CD4-positive, alpha-beta memory T cell (primary cell): ENCODE measurements at regions of chr16 and their contacts with region 1.

Region 1: GRCh38 chr16:68085259-68086071 is at the start of gene NFATC3:
- DNase-seq: peak; percentile 98 to 99 (median 98)
- H3K4me3 ChIP-seq: peak within 1 kb of the TSS; percentile 79 to 92
- H3K4me3 Mint-ChIP-seq: peak within 1 kb of the TSS; percentile 90 to 99 (median 94)
- H3K27ac ChIP-seq: peak within 1 kb of the TSS; percentile 89
- H3K27ac Mint-ChIP-seq: peak within 1 kb of the TSS; percentile 86 to 97 (median 92)
- H3K4me1 ChIP-seq: peaks cover 78% of the 10 kb centered on the region
- H3K4me1 Mint-ChIP-seq: peaks cover 53 to 80% (median 63%) of the 10 kb centered on the region in 4 donors
- H3K27me3 ChIP-seq: no peaks in the 10 kb centered on the region
- H3K27me3 Mint-ChIP-seq: no peaks in the 10 kb centered on the region
- total RNA-seq, gene NFATC3: 127 to 134 TPM

Region 2: DNA sequence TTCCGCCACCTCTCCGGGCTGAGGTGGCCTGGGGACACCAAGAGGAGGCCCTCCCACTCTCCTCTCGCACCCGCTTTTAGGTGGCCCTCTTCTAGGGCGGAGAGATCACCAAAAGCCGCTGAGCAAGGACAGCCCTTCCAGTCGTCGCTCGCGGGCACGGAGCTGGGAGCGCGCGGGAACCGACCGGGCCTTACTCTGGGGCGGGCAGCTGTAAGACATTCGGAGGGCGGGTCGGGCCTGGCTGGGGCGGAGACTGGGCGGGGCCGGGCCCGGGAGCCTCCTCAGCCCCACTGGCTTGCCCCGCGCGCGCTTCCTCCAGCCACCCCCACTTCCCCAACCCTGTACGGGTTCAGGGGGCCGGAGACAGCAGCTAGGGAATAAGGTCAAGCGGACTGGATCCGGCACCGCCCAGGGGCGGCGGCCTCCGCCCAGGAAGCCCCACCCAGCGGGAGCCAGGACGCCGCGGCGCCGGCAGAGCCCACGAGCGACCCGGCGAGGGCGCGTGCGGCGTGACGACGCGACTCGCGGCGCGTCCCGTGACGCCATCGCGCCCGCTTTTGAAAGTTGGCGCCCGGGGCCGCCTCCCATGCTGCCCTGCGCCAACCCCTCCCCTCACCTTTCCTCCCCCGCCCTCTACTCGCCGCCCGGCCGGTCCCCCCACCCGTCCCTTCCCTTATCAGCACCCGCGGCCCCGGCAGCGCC is 523.5 kb before region 1 on chr16:
- CTCF ChIA-PET with region 1: interaction called, 3 read pairs
- POLR2A ChIA-PET with region 1: interaction called, 9 read pairs
- intact Hi-C with region 1: loop called (anchors 1 kb)
- DNase-seq: peak; percentile 96 to 98 (median 97)
- H3K4me3 ChIP-seq: peak overlapping the region; percentile 61 to 78
- H3K4me3 Mint-ChIP-seq: peak overlapping the region; percentile 89 to 97 (median 91)
- H3K27ac ChIP-seq: peak overlapping the region; percentile 73
- H3K27ac Mint-ChIP-seq: peak overlapping the region; percentile 92 to 97 (median 96)
- H3K4me1 ChIP-seq: peaks cover 52% of the 10 kb centered on the region
- H3K4me1 Mint-ChIP-seq: peaks cover 23 to 53% (median 37%) of the 10 kb centered on the region in 4 donors
- H3K27me3 ChIP-seq: no peaks in the 10 kb centered on the region
- H3K27me3 Mint-ChIP-seq: no peaks in the 10 kb centered on the region

Region 3: GRCh38 chr16:67841764-67842508 is 243.5 kb before region 1 on chr16 and contains the start of gene THAP11:
- CTCF ChIA-PET with region 1: no interaction called
- POLR2A ChIA-PET with region 1: interaction called, 3 read pairs
- intact Hi-C with region 1: loop called (anchors 1 kb)
- DNase-seq: peak; percentile 94 to 98 (median 95)
- H3K4me3 ChIP-seq: peak within 1 kb of the TSS; percentile 74 to 99
- H3K4me3 Mint-ChIP-seq: peak within 1 kb of the TSS; percentile 93 to 98 (median 96)
- H3K27ac ChIP-seq: peak within 1 kb of the TSS; percentile 98
- H3K27ac Mint-ChIP-seq: peak within 1 kb of the TSS; percentile 97 to 99 (median 98)
- H3K4me1 ChIP-seq: peaks cover 38% of the 10 kb centered on the region
- H3K4me1 Mint-ChIP-seq: peaks cover 25 to 48% (median 36%) of the 10 kb centered on the region in 4 donors
- H3K27me3 ChIP-seq: no peaks in the 10 kb centered on the region
- H3K27me3 Mint-ChIP-seq: no peaks in the 10 kb centered on the region
- total RNA-seq, gene THAP11: 56.8 to 58.4 TPM

Region 4: GRCh38 chr16:67975321-67976105 is 110.0 kb before region 1 on chr16:
- CTCF ChIA-PET with region 1: no interaction called
- POLR2A ChIA-PET with region 1: no interaction called
- intact Hi-C with region 1: no loop called
- DNase-seq: no peak
- H3K4me3 ChIP-seq: no peak overlapping the region
- H3K4me3 Mint-ChIP-seq: no peak overlapping the region
- H3K27ac ChIP-seq: no peak overlapping the region
- H3K27ac Mint-ChIP-seq: no peak overlapping the region
- H3K4me1 ChIP-seq: no peaks in the 10 kb centered on the region
- H3K4me1 Mint-ChIP-seq: no peaks in the 10 kb centered on the region
- H3K27me3 ChIP-seq: no peaks in the 10 kb centered on the region
- H3K27me3 Mint-ChIP-seq: peaks cover 1 to 3% of the 10 kb centered on the region in 2 donors

Region 5: DNA sequence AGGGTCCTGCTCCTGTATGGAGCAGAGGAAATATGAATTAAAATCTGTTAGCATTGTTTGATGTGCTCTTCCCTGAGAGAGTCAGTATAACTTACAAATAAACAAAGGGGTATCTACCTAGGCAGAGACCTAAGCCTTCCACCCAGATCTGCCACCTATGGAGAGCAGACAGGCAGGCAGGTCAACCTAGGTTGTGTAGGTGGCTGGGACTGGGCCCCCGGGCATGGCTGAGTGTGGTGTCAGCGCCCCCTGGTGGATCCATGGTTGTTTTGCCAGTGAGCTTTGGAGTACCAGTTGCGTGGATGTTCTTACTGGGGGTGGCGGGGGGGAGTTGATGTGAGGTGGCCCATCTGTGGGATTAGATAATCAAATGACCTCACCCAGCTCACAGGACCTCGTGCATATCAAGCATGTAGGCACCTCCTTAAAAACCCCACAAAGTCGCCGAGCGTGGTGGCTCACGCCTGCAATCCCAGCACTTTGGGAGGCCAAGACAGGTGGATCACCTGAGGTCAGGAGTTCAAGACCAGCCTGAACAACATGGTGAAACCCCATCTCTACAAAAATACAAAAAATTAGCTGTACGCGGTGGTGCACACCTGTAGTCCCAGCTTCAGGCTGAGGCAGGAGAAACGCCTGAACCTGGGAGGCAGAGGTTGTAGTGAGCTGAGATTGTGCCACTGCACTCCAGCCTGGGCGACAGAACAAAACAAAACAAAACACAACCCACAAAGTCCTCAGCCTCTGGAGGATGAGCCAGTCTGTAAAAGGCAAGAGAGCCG is 44.8 kb before region 1 on chr16:
- CTCF ChIA-PET with region 1: interaction called, 18 read pairs
- POLR2A ChIA-PET with region 1: no interaction called
- intact Hi-C with region 1: no loop called
- DNase-seq: peak; percentile 84 to 88 (median 85)
- H3K4me3 ChIP-seq: no peak overlapping the region
- H3K4me3 Mint-ChIP-seq: no peak overlapping the region
- H3K27ac ChIP-seq: no peak overlapping the region
- H3K27ac Mint-ChIP-seq: peak overlapping the region; percentile 29 to 77 (median 44)
- H3K4me1 ChIP-seq: peaks cover 9% of the 10 kb centered on the region
- H3K4me1 Mint-ChIP-seq: peaks cover 6 to 16% (median 12%) of the 10 kb centered on the region in 4 donors
- H3K27me3 ChIP-seq: no peaks in the 10 kb centered on the region
- H3K27me3 Mint-ChIP-seq: no peaks in the 10 kb centered on the region

Region 6: DNA sequence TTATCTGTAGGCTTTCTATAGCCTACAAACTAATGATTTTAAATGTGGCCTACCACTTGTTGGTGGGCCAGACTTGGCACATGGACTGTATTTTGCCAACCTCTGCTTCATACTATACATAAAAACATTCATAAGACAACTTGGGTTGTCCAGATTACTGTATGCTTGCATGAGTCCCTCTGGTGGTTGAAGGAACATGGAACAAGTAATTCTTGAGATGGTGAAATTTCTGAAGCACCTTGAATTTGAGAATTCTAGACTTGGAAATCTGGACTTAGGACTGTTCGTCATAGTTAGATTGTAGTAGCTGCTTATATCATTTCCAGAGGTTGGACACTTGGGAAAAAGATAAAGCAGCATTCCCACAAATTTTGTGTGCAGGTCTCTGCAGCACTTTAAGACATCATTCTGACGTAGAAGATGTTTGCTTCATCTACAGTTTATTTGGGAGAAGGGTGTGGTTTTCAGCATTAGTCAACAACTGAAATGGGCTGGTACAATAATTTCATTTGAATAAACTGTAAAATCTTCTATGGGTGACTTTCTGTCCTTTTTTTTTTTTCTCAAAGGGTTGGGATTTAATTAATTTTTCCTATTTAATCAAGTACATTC is 30.9 kb after region 1 on chr16:
- CTCF ChIA-PET with region 1: interaction called, 6 read pairs
- POLR2A ChIA-PET with region 1: interaction called, 5 read pairs
- intact Hi-C with region 1: loop called (anchors 1 kb)
- DNase-seq: peak in 4 of 5 donors; percentile 30 to 41 (median 33)
- H3K4me3 ChIP-seq: no peak overlapping the region
- H3K4me3 Mint-ChIP-seq: peak overlapping the region in 4 of 8 donors; percentile 30 to 78 (median 50)
- H3K27ac ChIP-seq: no peak overlapping the region
- H3K27ac Mint-ChIP-seq: peak overlapping the region in 2 of 7 donors; percentile 62
- H3K4me1 ChIP-seq: peaks cover 95% of the 10 kb centered on the region
- H3K4me1 Mint-ChIP-seq: peaks cover 52 to 96% (median 79%) of the 10 kb centered on the region in 4 donors
- H3K27me3 ChIP-seq: no peaks in the 10 kb centered on the region
- H3K27me3 Mint-ChIP-seq: no peaks in the 10 kb centered on the region

Region 7: GRCh38 chr16:68448360-68448970 is 363.0 kb after region 1 on chr16 and contains the start of gene SMPD3:
- CTCF ChIA-PET with region 1: no interaction called
- POLR2A ChIA-PET with region 1: no interaction called
- intact Hi-C with region 1: loop called (anchors 1 kb)
- DNase-seq: peak; percentile 97 to 99 (median 98)
- H3K4me3 ChIP-seq: peak within 1 kb of the TSS; percentile 47 to 61
- H3K4me3 Mint-ChIP-seq: peak within 1 kb of the TSS; percentile 70 to 89 (median 78)
- H3K27ac ChIP-seq: no peak within 1 kb of the TSS
- H3K27ac Mint-ChIP-seq: peak within 1 kb of the TSS in 6 of 7 donors; percentile 43 to 88 (median 65)
- H3K4me1 ChIP-seq: peaks cover 36% of the 10 kb centered on the region
- H3K4me1 Mint-ChIP-seq: peaks cover 15 to 34% (median 22%) of the 10 kb centered on the region in 4 donors
- H3K27me3 ChIP-seq: peaks cover 8% of the 10 kb centered on the region
- H3K27me3 Mint-ChIP-seq: peaks cover 12 to 14% of the 10 kb centered on the region in 2 donors
- total RNA-seq, gene SMPD3: 0.75 to 3.1 TPM